Activated CD4-positive, alpha-beta memory T cell treated with anti-CD3 and anti-CD28 coated beads for 36 hours (primary cell): ENCODE measurements at regions of chr7 and their contacts with region 1.

Region 1: DNA sequence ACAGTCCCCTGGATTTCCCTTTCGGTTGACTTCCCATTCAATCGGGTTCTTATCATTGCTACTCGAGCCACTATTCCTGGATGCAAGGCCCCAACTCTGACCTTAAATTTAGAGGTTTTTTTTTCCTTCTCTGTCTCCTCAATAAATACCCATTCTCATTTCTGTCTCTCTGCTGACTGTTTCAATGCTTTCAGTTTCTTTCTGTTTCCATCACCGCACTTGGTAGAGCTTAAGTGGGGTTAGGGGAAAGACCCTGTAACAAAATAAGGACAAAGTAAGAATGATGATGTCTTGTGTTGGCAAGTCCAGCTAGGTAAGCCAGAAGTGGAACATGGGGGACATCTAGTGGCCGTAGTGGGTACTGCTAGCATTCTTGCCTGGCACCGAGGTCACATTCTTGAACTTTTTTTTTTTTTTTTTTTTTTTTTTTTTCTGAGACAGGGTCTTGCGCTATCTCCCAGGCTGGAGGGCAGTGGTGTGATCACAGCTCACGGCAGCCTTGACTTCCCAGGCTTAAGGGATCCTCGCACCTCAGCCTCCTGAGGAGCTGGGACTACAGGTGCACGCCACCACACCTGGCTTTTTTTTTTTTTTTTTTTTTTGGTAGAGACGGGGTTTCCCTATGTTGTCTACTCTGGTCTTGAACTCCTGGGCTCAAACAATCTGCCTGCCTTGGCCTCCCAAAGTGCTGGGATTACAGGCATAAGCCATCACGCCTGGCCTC is 40.3 kb downstream of the ZC3HC1 start:
- DNase-seq: peak; percentile 94
- H3K4me3 Mint-ChIP-seq: no peak overlapping the region
- H3K27ac Mint-ChIP-seq: peak overlapping the region; percentile 70
- H3K4me1 Mint-ChIP-seq: peaks cover 12% of the 10 kb centered on the region
- H3K27me3 Mint-ChIP-seq: no peaks in the 10 kb centered on the region

Region 2: GRCh38 chr7:129664029-129665012 is 346.5 kb before region 1 on chr7:
- CTCF ChIA-PET with region 1: interaction called, 3 read pairs
- POLR2A ChIA-PET with region 1: no interaction called
- intact Hi-C with region 1: loop called (anchors 1 kb)
- DNase-seq: no peak
- H3K4me3 Mint-ChIP-seq: no peak overlapping the region
- H3K27ac Mint-ChIP-seq: no peak overlapping the region
- H3K4me1 Mint-ChIP-seq: peaks cover 2% of the 10 kb centered on the region
- H3K27me3 Mint-ChIP-seq: no peaks in the 10 kb centered on the region